H1 (cell line): ENCODE measurements at regions of chr1 and their contacts with region 1.

Region 1: DNA sequence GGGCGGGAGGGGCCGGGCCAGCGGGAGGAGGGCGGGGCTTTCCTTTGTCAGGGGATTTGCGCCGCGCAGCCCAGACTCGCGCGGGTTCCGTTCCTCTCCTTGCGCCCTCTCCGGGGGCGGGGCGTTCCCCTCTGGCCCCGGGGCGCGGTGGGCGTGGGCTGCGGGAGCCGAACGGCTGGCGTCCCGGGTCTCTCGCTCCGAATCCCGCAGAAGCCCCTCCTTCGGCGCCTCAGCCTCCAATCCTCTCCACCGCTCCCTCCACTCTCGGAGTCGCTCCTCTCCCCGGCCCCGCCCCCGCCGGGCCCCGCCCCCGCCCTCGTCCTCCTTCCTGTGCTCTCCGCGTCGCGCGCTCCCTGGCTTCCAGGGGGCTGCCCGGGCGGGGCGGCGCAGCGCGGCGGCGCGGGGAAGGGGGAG is 82.8 kb upstream of the BMP8A start:
- DNase-seq: peak; percentile 80 to 93
- H3K4me3 ChIP-seq: peak overlapping the region; percentile 74 to 97 (median 88)
- H3K27ac ChIP-seq: peak overlapping the region; percentile 73
- H3K4me1 ChIP-seq: peaks cover 0 to 18% (median 12%) of the 10 kb centered on the region in 4 experiments; a peak in 5 of 7 replicates
- H3K27me3 ChIP-seq: no peaks in the 10 kb centered on the region
- CTCF ChIP-seq: no peak
- EP300 ChIP-seq: 0 out of 3 replicates have a peak, but pooled peaks of 1 of the 2 experiments have one; percentile 17
- POLR2A ChIP-seq: no peak; a peak in 1 of 3 replicates
- RAD21 ChIP-seq: no peak

Region 2: GRCh38 chr1:39199593-39199992 is 209.1 kb before region 1 on chr1:
- CTCF ChIA-PET with region 1: no interaction called
- POLR2A ChIA-PET with region 1: no interaction called
- DNase-seq: peak in 1 of 2 experiments; percentile 14
- H3K4me3 ChIP-seq: no peak overlapping the region
- H3K27ac ChIP-seq: no peak overlapping the region
- H3K4me1 ChIP-seq: peaks cover 4 to 6% (median 6%) of the 10 kb centered on the region in 4 experiments; a peak in 6 of 7 replicates
- H3K27me3 ChIP-seq: no peaks in the 10 kb centered on the region
- CTCF ChIP-seq: no peak
- EP300 ChIP-seq: no peak
- POLR2A ChIP-seq: no peak
- RAD21 ChIP-seq: no peak

Region 3: DNA sequence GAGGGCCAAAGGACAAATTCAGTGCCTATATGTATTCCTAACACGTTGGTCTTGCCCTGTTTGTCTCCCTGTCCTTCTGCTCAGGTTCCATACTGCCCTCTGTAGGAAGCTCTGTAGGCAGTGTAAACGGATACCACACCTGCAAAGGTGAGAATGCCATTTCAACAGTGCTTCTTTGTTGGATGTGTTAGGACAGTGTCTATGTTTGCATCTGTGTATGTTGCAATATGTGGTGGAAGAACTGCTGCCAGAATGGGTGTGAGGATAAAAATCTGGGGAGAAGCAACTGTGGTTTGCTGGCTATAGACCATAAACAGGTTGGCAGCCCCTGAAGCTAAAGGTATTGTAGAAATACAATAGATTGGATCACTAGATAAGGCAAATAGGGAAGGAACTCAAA is 30.3 kb before region 1 on chr1:
- CTCF ChIA-PET with region 1: interaction called, 46 read pairs
- POLR2A ChIA-PET with region 1: no interaction called
- DNase-seq: no peak
- H3K4me3 ChIP-seq: no peak overlapping the region
- H3K27ac ChIP-seq: no peak overlapping the region
- H3K4me1 ChIP-seq: no peaks in the 10 kb centered on the region
- H3K27me3 ChIP-seq: no peaks in the 10 kb centered on the region
- CTCF ChIP-seq: peak; percentile 43 to 92 (median 46); a peak in 3 of 4 replicates
- EP300 ChIP-seq: no peak
- POLR2A ChIP-seq: no peak
- RAD21 ChIP-seq: peak; percentile 50 to 55

Region 4: DNA sequence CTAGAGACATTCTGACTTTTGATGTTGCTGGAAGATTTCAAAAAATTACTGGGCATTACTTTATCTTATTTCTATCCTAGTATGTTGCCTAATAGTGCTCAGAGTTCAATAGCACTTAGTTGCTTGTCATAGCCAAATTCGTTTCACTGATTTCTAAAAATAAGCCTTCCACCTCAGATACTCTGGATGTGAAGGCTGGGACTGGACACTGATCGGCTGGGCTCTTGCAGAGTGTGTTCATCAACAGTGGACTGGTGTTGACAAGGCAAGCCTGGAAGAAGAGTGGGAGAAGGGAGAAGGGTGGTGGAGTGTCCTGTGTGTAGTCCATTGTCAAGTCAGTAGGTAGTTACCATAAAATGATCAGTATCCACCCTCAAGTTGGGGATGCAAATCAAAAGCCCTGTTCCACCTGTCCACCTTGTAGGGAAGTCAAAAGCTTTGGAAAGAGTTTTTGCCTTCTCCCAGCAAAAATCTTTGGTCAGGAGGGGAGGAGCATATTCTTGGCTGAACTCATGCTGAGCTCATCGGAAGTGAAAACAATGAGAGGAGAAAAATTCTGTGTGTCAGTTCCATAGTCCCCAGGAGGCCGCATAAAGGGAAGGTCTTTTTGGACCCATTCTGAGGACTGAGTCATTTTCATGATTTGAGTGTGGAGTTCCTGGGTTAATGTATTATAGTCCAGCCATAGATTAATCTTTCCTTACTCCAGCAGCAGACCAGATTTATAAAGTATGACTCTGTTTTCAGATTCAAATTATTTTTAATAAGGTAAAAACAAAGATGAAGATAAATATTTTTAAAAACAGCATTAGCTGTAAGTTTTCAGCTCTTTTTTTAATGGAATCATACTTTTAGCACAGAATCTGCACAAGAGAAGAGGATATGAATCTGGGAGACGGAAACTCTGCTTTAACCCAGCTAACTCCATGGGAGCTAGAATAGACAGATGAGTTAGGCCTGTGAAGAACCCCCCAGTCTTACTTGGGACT is 16.7 kb before region 1 on chr1:
- CTCF ChIA-PET with region 1: interaction called, 46 read pairs
- POLR2A ChIA-PET with region 1: interaction called, 6 read pairs
- DNase-seq: no peak
- H3K4me3 ChIP-seq: peak overlapping the region in 1 of 4 experiments; percentile 11; a peak in 1 of 8 replicates
- H3K27ac ChIP-seq: no peak overlapping the region
- H3K4me1 ChIP-seq: peaks cover 3 to 14% (median 8%) of the 10 kb centered on the region in 4 experiments; a peak in 5 of 7 replicates
- H3K27me3 ChIP-seq: no peaks in the 10 kb centered on the region
- CTCF ChIP-seq: no peak
- EP300 ChIP-seq: no peak
- POLR2A ChIP-seq: no peak
- RAD21 ChIP-seq: no peak

Region 5: GRCh38 chr1:39398278-39399021 is 10.2 kb before region 1 on chr1:
- CTCF ChIA-PET with region 1: interaction called, 36 read pairs
- POLR2A ChIA-PET with region 1: interaction called, 9 read pairs
- DNase-seq: no peak
- H3K4me3 ChIP-seq: no peak overlapping the region
- H3K27ac ChIP-seq: no peak overlapping the region
- H3K4me1 ChIP-seq: peaks cover 0 to 4% (median under 1%) of the 10 kb centered on the region in 4 experiments; a peak in 2 of 7 replicates
- H3K27me3 ChIP-seq: no peaks in the 10 kb centered on the region
- CTCF ChIP-seq: no peak
- EP300 ChIP-seq: no peak
- POLR2A ChIP-seq: no peak
- RAD21 ChIP-seq: no peak

Region 6: GRCh38 chr1:39420493-39420892 is 11.8 kb after region 1 on chr1:
- CTCF ChIA-PET with region 1: interaction called, 16 read pairs
- POLR2A ChIA-PET with region 1: interaction called, 4 read pairs
- DNase-seq: no peak
- H3K4me3 ChIP-seq: no peak overlapping the region
- H3K27ac ChIP-seq: no peak overlapping the region
- H3K4me1 ChIP-seq: peaks cover 0 to 3% (median 0%) of the 10 kb centered on the region in 4 experiments; a peak in 2 of 7 replicates
- H3K27me3 ChIP-seq: no peaks in the 10 kb centered on the region
- CTCF ChIP-seq: no peak
- EP300 ChIP-seq: no peak
- POLR2A ChIP-seq: no peak
- RAD21 ChIP-seq: no peak

Region 7: DNA sequence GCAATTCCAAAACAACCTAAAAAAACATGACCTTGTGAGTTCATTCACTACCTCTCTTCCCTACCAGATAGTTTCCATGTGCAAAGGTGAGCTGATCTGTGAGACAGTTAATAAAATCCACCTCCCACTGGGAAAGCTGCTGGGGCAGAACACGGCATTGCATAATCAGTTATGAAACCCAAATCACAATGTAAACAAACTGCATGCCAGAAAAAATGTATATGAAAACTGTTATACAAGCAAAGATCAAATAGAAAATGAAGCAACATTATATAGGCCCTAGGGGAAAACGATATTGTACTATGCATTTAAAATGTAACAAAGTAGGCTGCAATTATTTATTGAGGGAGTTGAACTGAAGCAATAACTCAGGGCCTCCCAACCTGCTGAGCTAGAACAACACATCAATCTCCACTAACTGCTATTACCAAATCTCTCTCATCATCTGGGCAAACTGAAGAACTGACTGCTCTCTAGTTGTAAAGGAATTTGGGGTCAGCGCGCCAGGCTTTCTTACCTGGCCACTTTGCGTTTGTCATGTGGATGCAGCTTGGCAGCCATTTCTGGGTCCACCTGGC is 443.7 kb after region 1 on chr1:
- CTCF ChIA-PET with region 1: no interaction called
- POLR2A ChIA-PET with region 1: no interaction called
- DNase-seq: no peak
- H3K4me3 ChIP-seq: no peak overlapping the region
- H3K27ac ChIP-seq: no peak overlapping the region
- H3K4me1 ChIP-seq: no peaks in the 10 kb centered on the region
- H3K27me3 ChIP-seq: no peaks in the 10 kb centered on the region
- CTCF ChIP-seq: no peak
- EP300 ChIP-seq: no peak
- POLR2A ChIP-seq: no peak
- RAD21 ChIP-seq: no peak